Cardiac septum (tissue), 1 donor: ENCODE measurements at regions of chr5 and their contacts with region 1.

Region 1: GRCh38 chr5:134577796-134578363 is 52.4 kb downstream of the JADE2 start:
- DNase-seq: peak; percentile 86

Region 2: GRCh38 chr5:134370871-134371833 is 206.7 kb before region 1 on chr5 and contains the start of gene UBE2B:
- intact Hi-C with region 1: loop called (anchors 5 kb)
- DNase-seq: peak; percentile 99
- total RNA-seq, gene UBE2B: 180 TPM